ENCODE measurements at regions of chr6 and their contacts with region 1.

Region 1: DNA sequence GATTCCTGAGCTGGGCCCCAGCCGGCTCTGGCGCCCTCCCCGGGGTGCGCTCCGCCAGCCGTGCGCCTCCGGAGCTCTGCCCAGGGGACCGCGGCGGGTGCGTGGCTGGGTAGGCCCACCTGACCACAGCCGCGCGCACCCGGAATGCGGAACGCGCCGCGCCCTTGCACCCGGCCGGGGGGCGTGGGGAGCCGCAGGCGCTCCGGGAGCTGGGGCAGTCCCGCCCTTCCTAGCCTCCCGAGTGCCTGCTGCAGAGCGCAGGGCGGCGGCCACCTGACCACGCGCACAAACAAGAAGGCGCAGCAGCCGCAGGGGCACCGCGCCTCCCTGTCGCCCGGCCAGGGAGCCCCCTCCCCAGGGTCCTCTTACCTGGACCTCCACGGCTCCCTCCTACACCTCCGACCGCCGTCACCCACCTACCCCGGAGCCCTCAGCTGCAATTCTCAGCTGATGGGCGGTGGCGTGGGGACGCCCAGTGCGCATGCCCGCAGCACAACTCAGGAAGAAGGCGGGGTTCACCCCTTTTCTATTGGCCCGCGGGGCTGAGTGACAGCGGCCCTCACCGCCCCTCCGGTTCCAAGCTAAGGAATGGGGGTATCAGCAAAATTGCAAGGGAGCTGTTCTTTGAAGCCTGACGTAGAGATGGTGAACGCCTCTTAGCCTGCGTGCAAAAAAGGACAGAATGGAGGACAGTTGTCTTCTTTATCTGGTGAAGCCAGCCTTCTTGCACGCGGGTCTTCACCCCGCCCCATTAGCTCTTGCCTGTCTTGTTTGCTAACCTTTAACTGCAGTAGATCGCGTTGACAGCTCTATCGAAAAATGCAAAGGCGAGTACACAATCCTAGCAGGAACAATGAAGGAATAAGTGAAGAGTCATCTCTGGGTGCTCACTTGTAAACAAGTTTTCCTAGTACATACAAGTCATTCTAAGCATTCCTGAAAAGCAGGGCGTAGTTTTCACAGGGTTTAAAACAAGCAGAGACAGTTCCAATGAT is at the start of gene STX7:
- DNase-seq: no peak
- H3K4me3 ChIP-seq: peak within 1 kb of the TSS; percentile 81
- CTCF ChIP-seq: no peak

Region 2: DNA sequence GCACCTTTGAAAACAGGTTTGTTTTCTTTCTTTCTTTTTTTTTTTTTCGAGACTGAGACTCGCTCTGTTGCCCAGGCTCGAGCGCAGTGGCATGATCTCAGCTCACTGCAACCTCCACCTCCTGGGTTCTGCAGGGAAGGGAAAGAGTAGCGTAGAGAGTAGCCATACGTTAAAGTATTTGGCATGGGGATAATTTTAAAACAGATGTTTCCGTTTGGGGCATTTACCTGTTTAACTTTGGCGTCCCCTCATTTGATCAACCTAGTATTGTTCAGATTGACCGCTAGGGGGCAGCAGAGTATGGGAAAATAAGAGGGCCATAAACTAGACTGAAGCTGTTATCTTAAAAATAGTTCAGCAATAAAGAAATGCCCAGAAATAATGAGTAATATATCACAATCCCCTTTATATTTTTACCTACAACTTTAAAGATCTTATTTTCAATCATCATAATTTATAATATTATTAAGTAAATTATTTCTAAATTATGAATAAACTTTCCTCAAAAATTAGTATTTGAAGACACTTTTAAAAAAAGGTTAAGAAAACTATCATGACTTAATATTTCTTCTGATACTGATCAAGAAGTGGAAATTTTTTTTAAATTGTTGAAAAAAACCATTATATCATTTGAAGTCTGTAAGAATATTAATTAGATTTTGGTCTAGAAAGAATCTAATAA is 17.5 kb after region 1 on chr6:
- CTCF ChIA-PET with region 1: interaction called, 13 read pairs
- POLR2A ChIA-PET with region 1: interaction called, 5 read pairs
- DNase-seq: no peak
- H3K4me3 ChIP-seq: no peak overlapping the region
- CTCF ChIP-seq: peak; percentile 66

Region 3: GRCh38 chr6:132551214-132551613 is 38.3 kb after region 1 on chr6:
- CTCF ChIA-PET with region 1: no interaction called
- POLR2A ChIA-PET with region 1: no interaction called
- DNase-seq: no peak
- H3K4me3 ChIP-seq: no peak overlapping the region
- CTCF ChIP-seq: no peak

Region 4: DNA sequence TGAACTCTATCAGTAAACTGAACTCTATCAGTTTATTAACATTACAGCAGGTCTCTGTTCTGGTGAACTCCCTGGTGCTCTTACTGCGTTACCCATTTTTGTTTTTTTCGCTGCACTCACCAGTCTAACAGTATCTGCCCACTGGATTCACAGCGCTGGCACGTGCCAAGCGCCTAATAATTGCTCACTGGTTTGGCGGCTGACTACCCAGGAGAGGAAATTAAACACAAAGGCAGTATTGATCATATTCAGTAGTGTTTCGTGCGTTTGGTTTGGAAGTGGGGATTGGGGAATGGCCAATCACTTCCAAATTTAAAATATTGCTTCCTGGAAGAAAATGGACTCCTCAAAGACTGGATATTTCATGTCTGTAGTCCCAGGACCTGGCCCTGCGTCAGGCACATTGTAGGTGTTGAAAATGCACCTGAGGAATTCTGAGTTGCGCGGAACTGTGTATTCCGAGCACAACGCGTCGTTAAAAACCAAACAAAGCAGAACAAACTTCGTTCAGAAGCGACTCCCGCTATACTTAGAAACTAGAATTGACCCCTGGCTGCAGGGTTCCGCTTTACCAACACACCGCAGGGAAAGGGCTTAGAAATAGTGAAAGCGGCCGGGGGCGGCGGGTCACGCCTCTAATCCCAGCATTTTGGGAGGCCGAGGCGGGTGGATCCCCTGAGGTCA is 300.4 kb after region 1 on chr6:
- CTCF ChIA-PET with region 1: no interaction called
- POLR2A ChIA-PET with region 1: interaction called, 14 read pairs
- DNase-seq: no peak
- H3K4me3 ChIP-seq: peak overlapping the region; percentile 85
- CTCF ChIP-seq: no peak

Measured in AG04449 (cell line).